ENCODE measurements at regions of chr2 and their contacts with region 1.

Region 1: DNA sequence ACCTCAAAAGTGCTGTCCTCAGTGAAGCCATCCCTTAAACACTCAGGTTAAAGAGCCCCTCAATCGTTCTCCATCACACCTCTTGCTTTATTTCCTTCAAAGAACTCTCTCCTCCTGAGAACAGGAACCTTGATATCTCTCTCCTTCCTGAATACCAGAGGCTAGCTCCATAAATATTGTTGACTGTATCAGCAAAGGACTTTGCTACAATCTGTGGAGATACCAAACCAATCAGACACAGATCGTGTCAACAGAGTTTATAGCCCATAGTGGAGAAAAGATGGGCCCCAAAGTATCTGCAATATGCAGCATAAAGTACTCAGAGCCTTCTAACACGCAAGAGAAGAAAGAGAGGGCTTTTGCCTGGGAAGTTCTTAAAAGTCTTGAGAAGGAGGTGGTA is 36.4 kb downstream of the PLEKHM3 start:
- DNase-seq: no peak
- H3K4me3 ChIP-seq: no peak overlapping the region
- CTCF ChIP-seq: no peak
- POLR2A ChIP-seq: no peak

Region 2: DNA sequence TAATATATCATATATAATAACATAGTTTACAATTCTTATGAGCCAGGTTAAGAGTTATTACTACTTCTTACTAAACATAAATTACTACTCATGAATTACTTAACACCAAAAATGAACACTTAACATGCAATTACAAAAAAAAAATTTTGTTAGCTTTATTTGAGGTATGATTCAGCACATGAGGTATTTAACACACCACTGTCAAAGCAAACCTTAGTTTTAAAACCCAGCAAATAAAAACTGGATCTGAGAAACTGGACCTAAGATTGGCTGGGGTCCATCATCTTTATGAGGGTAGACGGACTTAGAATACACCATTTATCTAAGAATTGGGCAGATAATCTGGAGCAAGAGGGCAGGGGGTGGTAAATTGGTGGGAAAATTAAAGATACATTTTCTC is 541.0 kb before region 1 on chr2:
- intact Hi-C with region 1: no loop called
- DNase-seq: no peak
- H3K4me3 ChIP-seq: no peak overlapping the region
- CTCF ChIP-seq: no peak
- POLR2A ChIP-seq: no peak

Region 3: DNA sequence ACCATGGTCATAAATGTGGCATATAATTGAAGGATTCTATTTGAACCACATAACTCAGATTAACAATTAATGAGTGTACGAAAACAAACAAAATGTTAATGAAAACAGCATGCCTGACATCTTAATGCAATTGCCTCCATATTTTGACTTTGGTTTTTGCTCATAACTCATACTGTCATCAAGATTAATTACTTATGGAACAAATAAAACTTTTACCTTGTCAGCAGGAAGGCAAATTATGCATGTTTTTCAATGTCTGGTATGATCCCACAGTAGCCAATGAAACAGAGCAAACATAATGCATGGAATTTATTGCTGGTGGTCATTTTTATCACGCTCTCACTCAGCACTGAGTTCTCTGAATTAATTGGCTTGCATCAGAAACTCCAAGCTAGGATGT is 31.3 kb after region 1 on chr2:
- intact Hi-C with region 1: loop called (anchors 2 kb)
- DNase-seq: no peak
- H3K4me3 ChIP-seq: no peak overlapping the region
- CTCF ChIP-seq: no peak
- POLR2A ChIP-seq: no peak

Measured in lower leg skin (tissue), 4 donors.